ENCODE measurements at regions of chr10 and their contacts with region 1.

Region 1: DNA sequence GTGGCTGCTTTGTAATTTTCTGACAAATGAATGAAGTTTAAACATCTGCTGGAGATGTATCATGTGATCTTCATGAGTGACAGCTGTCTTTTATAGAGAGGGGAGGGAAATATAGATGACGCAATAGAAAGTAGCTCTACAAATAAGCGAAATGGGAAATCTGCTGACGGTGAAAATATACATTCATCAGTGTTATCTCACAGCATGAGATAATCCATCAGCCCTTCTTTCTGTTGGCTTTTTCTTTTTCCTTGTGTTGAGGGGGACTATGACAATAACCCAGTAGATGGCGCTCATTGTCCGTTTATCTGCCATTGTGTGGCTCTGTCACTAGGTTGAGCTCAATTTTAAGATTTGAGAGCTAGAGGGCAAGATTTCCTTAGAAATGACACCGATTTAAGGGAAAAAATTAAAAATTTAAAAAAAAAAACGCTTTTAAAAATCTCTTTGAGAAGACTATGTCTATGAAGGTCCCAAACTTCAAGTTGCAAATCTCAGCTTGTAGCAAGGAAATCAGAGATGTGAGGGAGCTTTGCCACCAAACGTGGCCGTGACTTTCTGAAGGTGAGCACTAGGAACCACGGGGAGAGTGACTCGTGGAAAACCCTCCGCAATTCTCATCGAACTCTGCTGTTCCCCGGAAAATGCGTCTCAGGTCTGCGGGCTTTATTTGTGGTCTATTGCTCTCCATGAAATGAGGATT is 114.6 kb upstream of the SFMBT2 start:
- DNase-seq: peak; percentile 37 to 52 (median 47)
- H3K4me3 ChIP-seq: no peak overlapping the region
- H3K4me3 Mint-ChIP-seq: no peak overlapping the region
- H3K27ac ChIP-seq: no peak overlapping the region
- H3K27ac Mint-ChIP-seq: no peak overlapping the region
- H3K4me1 ChIP-seq: peaks cover 0 to 3% of the 10 kb centered on the region in 2 donors
- H3K4me1 Mint-ChIP-seq: peaks cover 8% of the 10 kb centered on the region
- H3K27me3 ChIP-seq: peaks cover 4 to 18% of the 10 kb centered on the region in 2 donors
- H3K27me3 Mint-ChIP-seq: peaks cover 8 to 22% (median 16%) of the 10 kb centered on the region in 3 donors
- CTCF ChIP-seq: peak; percentile 83

Region 2: GRCh38 chr10:7484456-7485243 is 40.8 kb before region 1 on chr10:
- intact Hi-C with region 1: no loop called
- DNase-seq: peak in 2 of 3 donors; percentile 35 to 47
- H3K4me3 ChIP-seq: peak overlapping the region; percentile 29 to 73 (median 58)
- H3K4me3 Mint-ChIP-seq: peak overlapping the region; percentile 65 to 87
- H3K27ac ChIP-seq: peak overlapping the region; percentile 24 to 78
- H3K27ac Mint-ChIP-seq: peak overlapping the region; percentile 71 to 90 (median 81)
- H3K4me1 ChIP-seq: peaks cover 83 to 91% of the 10 kb centered on the region in 2 donors
- H3K4me1 Mint-ChIP-seq: peaks cover 85% of the 10 kb centered on the region
- H3K27me3 ChIP-seq: no peaks in the 10 kb centered on the region
- H3K27me3 Mint-ChIP-seq: no peaks in the 10 kb centered on the region
- CTCF ChIP-seq: no peak

Region 3: DNA sequence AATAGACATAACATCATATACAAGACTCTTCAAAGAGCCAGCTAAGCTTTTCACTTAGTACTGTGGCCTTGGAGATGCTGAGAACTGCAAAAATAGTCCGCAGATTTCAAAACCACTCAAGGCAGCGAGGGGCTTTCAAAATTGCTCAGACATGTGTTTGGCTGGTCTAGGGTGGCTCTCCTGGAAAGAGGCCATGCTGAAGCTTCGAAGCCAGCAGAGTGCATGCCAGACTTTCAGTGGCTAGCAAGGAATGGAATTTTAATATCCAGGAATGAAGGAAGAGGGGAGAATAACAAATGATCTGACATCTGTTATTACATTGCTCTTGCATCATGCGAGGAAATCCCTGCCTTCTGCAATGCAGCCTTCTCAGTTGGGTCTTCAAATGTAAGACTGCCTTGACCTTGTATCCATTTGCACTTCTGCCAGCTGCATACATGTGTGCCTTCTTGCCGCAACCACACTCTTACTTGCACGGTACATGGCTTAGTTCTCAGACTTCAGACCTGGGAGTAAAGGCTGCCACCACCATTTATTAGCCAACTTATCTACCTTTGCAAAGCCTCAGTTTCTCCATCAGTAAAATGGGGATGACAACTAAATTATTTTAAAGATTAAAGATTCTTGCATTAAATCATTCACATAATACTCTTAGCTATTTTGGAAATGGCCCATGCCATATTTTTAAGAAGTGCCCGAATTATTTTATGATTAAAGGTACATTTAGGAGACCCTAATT is 85.4 kb after region 1 on chr10:
- intact Hi-C with region 1: no loop called
- DNase-seq: no peak
- H3K4me3 ChIP-seq: no peak overlapping the region
- H3K4me3 Mint-ChIP-seq: no peak overlapping the region
- H3K27ac ChIP-seq: no peak overlapping the region
- H3K27ac Mint-ChIP-seq: no peak overlapping the region
- H3K4me1 ChIP-seq: peaks cover 0 to 5% of the 10 kb centered on the region in 2 donors
- H3K4me1 Mint-ChIP-seq: peaks cover 5% of the 10 kb centered on the region
- H3K27me3 ChIP-seq: no peaks in the 10 kb centered on the region
- H3K27me3 Mint-ChIP-seq: peaks cover 2 to 6% (median 3%) of the 10 kb centered on the region in 3 donors
- CTCF ChIP-seq: no peak

Region 4: GRCh38 chr10:7687228-7687907 is 161.9 kb after region 1 on chr10:
- intact Hi-C with region 1: loop called in 1 of 2 experiments (anchors 5 kb)
- DNase-seq: peak; percentile 44 to 66 (median 45)
- H3K4me3 ChIP-seq: no peak overlapping the region
- H3K4me3 Mint-ChIP-seq: no peak overlapping the region
- H3K27ac ChIP-seq: no peak overlapping the region
- H3K27ac Mint-ChIP-seq: peak overlapping the region in 1 of 7 donors; percentile 38
- H3K4me1 ChIP-seq: no peaks in the 10 kb centered on the region
- H3K4me1 Mint-ChIP-seq: peaks cover 3% of the 10 kb centered on the region
- H3K27me3 ChIP-seq: peaks cover under 1 to 4% of the 10 kb centered on the region in 2 donors
- H3K27me3 Mint-ChIP-seq: peaks cover 7 to 17% (median 8%) of the 10 kb centered on the region in 3 donors
- CTCF ChIP-seq: peak; percentile 80